Activated CD4-positive, alpha-beta T cell treated with anti-CD3 and anti-CD28 coated beads, Interleukin-2, amount 10 ng/mL, durations not matched to agents 24 days and 14 days (primary cell): ENCODE measurements at regions of chr3 and their contacts with region 1.

Region 1: DNA sequence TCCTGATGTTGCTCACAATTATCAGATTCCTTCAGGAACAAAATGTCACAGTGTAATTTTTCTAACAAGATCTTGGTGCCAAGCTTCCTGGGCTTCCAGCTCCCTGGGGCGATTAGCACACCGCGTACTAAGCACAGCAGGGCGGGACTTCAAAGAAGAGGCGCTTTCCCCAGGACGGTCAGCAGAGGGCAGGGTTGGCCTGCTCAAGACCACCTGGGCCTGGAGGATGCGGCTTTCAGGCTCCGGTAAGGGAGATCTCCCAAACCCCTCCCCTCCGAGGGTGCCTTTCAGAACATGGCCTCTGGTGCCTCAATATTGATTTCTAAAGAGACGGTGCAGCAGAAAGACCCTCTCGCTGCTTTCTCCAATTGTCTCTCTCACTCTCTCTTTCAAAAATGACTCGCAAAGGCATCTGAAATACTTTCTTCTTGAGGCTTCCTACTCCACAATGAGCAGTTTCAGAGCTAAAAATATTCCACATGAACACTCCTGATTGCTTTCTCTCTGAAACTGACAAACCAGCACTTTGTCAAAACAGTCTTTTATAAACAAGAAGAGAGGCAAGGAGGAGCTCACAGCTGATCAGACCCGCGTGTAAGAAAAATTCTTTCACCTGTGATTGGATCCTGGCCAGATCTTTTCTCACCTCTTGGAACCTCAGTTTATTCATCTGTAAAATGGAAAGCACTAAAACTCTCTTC is 154.0 kb downstream of the ADAMTS9 start:
- DNase-seq: peak; percentile 78
- H3K4me3 Mint-ChIP-seq: no peak overlapping the region
- H3K27ac Mint-ChIP-seq: no peak overlapping the region
- H3K4me1 Mint-ChIP-seq: no peaks in the 10 kb centered on the region
- H3K27me3 Mint-ChIP-seq: no peaks in the 10 kb centered on the region

Region 2: GRCh38 chr3:65672871-65673815 is 1139.4 kb after region 1 on chr3:
- intact Hi-C with region 1: loop called (anchors 5 kb)
- DNase-seq: peak; percentile 65
- H3K4me3 Mint-ChIP-seq: no peak overlapping the region
- H3K27ac Mint-ChIP-seq: no peak overlapping the region
- H3K4me1 Mint-ChIP-seq: no peaks in the 10 kb centered on the region
- H3K27me3 Mint-ChIP-seq: no peaks in the 10 kb centered on the region

Region 3: DNA sequence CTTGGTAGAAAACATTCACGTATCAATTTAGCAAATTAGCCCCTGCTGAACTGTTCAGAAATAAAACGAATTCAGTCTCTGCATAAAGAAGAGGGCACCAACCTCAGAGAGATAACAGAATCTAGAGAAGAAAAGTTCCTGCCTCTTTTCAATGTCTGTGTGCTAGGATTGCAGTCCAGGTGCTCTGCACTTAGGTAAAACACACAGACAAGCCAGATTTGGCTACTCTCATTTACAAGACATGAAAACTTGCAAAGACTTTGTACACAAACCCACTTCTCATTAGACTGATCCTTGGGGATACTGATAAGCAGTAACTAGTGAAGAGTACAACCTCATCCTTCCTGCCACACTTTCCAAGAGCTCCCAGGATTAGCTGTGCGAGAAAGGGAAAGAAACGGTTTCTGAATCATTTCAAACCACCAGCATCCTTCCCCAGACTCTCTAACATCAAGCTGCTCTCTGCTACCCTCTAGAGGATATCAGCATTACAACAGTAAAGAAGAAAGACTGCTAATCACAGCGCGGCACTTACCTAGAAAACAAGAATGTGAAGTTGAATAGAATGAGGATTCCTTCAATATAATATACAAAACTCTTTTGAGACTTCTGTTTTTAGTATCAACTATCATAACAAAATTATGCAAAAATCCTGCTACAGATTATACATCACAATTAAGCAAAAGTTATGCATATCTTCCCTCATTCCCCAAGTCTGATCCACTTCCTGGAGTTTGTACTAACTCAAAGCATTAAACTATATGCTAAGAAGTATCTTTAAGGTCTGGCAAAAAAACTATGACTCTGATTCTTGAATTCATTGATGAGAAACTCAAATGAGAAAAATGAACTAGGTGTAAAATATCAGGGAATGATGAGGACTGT is 1198.5 kb after region 1 on chr3:
- intact Hi-C with region 1: loop called (anchors 5 kb)
- DNase-seq: peak; percentile 70
- H3K4me3 Mint-ChIP-seq: no peak overlapping the region
- H3K27ac Mint-ChIP-seq: no peak overlapping the region
- H3K4me1 Mint-ChIP-seq: no peaks in the 10 kb centered on the region
- H3K27me3 Mint-ChIP-seq: no peaks in the 10 kb centered on the region